Naive thymus-derived CD8-positive, alpha-beta T cell (primary cell): ENCODE measurements at regions of chr5 and their contacts with region 1.

Region 1: DNA sequence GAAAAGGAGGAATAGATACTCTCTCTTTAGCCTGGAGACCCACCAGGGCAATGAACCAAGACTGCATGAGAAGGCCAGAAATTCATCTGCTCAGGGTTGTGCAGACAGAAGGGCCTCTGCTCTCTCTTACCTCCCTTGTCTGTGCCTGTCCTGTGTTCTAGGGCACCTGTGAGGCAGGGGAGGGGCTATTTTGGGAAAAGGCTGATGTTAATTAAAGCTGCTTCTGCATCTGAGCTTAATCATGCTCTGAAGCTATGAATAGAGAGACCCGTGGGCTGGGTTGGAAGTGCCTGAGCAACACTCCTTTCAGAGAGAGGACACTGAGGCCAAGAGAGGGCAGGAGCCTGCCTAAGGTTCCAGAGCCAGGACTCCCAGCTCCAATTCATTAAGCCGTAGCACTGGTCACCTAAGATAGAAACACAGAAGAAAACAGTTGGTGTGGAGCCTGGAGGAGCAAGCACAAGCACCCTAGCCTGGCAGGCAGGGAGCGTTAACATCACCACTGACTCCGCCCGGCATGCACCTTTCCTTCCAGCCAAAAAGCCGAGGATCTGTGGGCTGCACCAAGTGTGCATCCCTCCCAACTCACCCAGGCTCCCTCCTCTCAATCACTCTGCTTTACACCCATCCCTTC is 31.4 kb upstream of the STING1 start:
- DNase-seq: no peak
- ATAC-seq: no peak
- H3K4me3 Mint-ChIP-seq: peak overlapping the region in 1 of 10 donors; percentile 52
- H3K27ac Mint-ChIP-seq: peak overlapping the region in 5 of 10 donors; percentile 0 to 81 (median 76)
- H3K4me1 Mint-ChIP-seq: peaks cover 31 to 60% (median 51%) of the 10 kb centered on the region in 4 donors
- H3K27me3 Mint-ChIP-seq: no peaks in the 10 kb centered on the region

Region 2: GRCh38 chr5:139422307-139422893 is 91.6 kb before region 1 on chr5:
- POLR2A ChIA-PET with region 1: interaction called, 50 read pairs
- DNase-seq: peak in 9 of 10 donors; percentile 41 to 84 (median 67)
- ATAC-seq: peak; percentile 98 to 99
- H3K4me3 Mint-ChIP-seq: no peak overlapping the region
- H3K27ac Mint-ChIP-seq: peak overlapping the region in 5 of 10 donors; percentile 10 to 81 (median 70)
- H3K4me1 Mint-ChIP-seq: peaks cover 4 to 7% (median 5%) of the 10 kb centered on the region in 4 donors
- H3K27me3 Mint-ChIP-seq: no peaks in the 10 kb centered on the region

Region 3: DNA sequence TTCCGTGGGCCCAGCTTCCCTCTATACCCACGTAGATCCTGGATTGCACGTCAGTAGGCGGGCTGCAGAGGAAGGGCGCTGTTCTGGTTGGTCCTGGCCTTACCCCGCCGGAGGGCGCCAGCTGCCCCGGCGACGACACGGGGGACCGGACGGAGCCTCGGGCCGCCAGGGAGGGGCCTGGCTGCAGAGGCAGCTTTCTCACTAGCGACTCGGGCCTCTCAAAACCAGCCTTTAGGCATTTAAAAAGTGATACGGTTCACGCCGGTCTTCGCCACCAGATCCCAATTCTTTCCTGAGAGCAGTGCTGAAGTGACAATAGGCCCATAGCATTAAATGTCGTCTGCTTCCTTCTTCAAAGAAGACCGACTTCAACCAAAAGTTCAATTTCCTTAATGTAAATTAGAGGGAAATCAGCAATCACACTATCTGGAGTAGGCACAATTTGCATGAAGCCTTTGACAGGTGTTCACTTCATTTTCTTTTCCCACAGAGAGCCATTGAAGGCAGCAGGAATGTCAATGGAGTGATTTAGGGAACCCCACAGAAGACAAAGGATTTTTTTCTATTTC is 29.5 kb after region 1 on chr5:
- POLR2A ChIA-PET with region 1: no interaction called
- DNase-seq: peak; percentile 35 to 80 (median 48)
- ATAC-seq: peak; percentile 99 to 100
- H3K4me3 Mint-ChIP-seq: peak overlapping the region; percentile 51 to 75 (median 56)
- H3K27ac Mint-ChIP-seq: peak overlapping the region in 7 of 10 donors; percentile 68 to 85 (median 72)
- H3K4me1 Mint-ChIP-seq: peaks cover 0 to 10% (median 7%) of the 10 kb centered on the region in 4 donors
- H3K27me3 Mint-ChIP-seq: peaks cover 0 to 3% (median 0%) of the 10 kb centered on the region in 5 donors